ENCODE measurements at regions of chr7 and their contacts with region 1.

Region 1: DNA sequence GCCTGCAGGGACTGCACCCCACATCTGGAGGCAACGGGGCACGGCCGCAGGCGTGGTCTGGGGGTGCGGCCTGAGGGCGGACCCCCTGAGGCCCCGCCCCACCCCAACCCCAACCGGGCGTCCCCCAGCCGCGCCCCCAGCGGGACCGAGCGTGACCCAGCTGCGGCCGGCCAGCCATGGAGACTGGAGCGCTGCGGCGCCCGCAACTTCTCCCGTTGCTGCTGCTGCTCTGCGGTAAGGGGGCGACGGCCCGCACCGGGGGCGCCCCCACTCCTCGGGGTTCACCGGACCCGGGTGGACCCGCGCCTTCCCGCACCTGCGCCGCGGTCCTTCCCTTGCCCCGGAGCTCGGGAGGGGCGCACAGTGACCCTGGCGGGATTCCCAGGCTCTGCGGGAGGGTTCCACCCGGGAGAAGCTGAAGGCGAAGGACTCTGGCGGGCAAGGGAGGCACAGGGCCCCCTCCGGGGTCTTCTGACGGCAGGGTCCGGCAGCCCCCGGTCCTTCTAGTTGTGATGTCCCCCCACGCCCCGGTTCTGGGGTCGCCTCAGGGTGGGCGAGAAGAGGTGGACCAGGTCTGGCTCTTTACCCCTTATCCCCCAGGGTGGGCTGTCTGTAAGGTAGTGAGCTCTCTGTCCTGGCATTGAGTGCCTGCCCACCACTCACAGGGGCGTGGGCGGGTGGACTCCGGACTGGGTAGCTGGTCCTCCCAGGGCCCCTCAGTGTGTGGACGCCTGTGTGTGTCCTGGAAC is at the start of gene RAMP3:
- DNase-seq: peak; percentile 42
- ATAC-seq: peak; percentile 36
- H3K4me3 Mint-ChIP-seq: peak within 1 kb of the TSS; percentile 72
- H3K27ac Mint-ChIP-seq: no peak within 1 kb of the TSS
- H3K4me1 Mint-ChIP-seq: peaks cover 13% of the 10 kb centered on the region; the same call in 1 of the 2 replicates
- H3K27me3 Mint-ChIP-seq: peaks cover 36% of the 10 kb centered on the region
- CTCF ChIP-seq: no peak
- total RNA-seq, gene RAMP3: 0.85 to 1.2 TPM (median 1.1 TPM) in 3 replicates

Region 2: DNA sequence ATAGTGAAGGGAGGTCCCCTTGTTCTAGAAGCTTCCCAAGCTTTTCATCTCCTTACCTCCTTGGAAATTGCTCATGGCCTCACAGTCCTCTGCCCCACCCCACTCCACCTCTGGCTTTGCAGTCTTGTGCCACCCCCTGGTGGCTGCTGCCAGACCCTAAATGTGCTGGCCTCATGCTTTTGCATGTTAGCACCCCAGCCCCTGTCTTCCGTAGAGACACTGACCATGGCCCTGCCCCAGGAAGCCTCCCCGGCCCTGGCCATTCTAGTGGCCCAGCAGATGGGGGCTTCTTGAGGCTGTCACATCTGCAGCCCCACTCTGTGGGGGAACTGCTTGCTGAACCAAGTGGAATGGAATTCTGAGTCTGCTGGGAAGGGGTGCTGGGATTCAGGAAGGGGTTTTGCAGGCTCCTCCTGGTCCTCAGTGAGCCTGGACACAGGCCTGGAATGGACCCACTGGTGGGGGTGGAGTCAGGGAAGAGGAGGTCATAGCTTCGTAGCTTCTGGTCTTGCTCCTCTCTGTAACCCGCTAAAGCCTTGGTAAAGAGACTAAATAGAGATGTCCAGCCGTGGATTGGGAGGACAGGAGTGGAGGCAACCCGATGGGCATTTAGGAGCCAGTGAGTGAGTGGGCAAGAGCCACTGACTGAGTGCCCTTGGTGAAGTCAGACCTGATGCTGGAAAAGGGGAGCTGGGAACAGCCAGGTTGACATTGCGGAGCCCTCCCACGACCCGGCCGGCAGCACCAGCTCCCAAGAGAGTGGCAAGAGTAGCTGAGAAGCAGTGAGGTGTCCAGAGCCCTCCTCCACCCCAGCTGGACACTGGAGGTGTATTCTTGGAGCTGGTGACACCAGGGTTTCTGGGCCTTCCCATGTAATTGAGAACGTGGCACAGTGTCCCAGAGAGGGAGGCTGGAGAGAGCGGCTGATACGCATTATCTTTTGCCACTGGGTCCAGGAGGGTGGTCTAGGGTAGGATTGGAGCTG is 20.7 kb after region 1 on chr7:
- CTCF ChIA-PET with region 1: interaction called, 15 read pairs
- POLR2A ChIA-PET with region 1: interaction called, 3 read pairs
- DNase-seq: peak; percentile 44
- ATAC-seq: peak; percentile 79
- H3K4me3 Mint-ChIP-seq: no peak overlapping the region
- H3K27ac Mint-ChIP-seq: no peak overlapping the region
- H3K4me1 Mint-ChIP-seq: no peaks in the 10 kb centered on the region
- H3K27me3 Mint-ChIP-seq: peaks cover 5% of the 10 kb centered on the region; the same call in 1 of the 2 replicates
- CTCF ChIP-seq: 0 out of 2 replicates have a peak, but pooled peaks have one; percentile 15

Measured in WTC11 (cell line).